Dorsolateral prefrontal cortex (tissue), 120 donors: ENCODE measurements at regions of chr15 and their contacts with region 1.

Region 1: DNA sequence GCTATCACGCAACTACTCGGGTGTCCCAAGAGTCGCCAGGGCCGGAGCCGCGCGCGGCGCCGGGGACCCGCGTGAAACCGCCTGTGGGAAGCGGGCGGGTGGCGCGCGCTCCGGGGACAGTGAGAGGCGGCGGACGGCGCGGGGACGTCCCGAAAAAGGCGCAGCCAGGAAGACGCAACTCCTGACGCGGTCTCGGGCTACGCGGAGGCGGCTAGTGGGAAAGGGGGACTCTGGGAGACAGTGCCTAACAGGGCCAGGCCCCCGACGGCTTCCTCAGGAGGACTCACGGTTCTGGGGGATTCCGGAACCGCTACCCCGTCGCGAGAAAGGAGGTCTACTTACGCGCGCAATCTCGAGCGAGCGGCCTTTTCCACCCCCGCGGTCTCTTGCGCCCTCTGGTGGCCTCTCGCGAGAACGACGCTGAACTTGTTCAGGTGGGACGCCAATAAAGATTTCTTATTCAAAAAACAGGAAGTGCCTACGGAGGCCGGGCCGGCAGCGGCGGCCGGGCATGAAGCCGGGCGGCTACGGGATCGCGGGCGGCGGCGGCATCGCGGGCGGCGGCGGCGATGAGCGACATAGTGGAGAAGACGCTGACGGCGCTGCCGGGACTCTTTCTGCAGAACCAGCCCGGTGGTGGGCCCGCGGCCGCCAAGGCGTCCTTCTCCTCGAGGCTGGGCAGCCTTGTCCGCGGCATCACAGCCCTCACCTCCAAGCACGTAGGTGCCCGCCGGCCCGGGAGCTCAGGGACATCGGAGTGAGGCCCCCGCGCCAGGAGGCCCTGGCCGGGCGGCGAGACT is at the start of gene AP4E1:
- DNase-seq: peak; percentile 80 to 92 (median 86)
- H3K4me3 ChIP-seq: peak within 1 kb of the TSS; percentile 52 to 100 (median 96)
- H3K27ac ChIP-seq: peak within 1 kb of the TSS; percentile 3 to 98 (median 93)
- H3K27me3 ChIP-seq: no peaks in the 10 kb centered on the region
- CTCF ChIP-seq: peak; percentile 85 to 100 (median 97)
- total RNA-seq, gene AP4E1: 7.4 to 15.4 (median 11.5) TPM

Region 2: GRCh38 chr15:50354838-50355618 is 553.4 kb before region 1 on chr15 and contains the start of gene GABPB1:
- intact Hi-C with region 1: loop called (anchors 2 to 10 kb)
- DNase-seq: peak; percentile 76 to 90 (median 84)
- H3K4me3 ChIP-seq: peak within 1 kb of the TSS; percentile 70 to 100 (median 93)
- H3K27ac ChIP-seq: peak within 1 kb of the TSS; percentile 87 to 100 (median 98)
- H3K27me3 ChIP-seq: no peaks in the 10 kb centered on the region
- CTCF ChIP-seq: peak in 14 of 56 donors; percentile 3 to 35 (median 10)
- total RNA-seq, gene GABPB1: 7.9 to 16.9 (median 11.0) TPM

Region 3: GRCh38 chr15:50424066-50424890 is 484.1 kb before region 1 on chr15 and contains the start of gene USP8:
- intact Hi-C with region 1: loop called in 1 of 2 experiments (anchors 5 kb)
- DNase-seq: peak; percentile 91 to 98 (median 94)
- H3K4me3 ChIP-seq: peak within 1 kb of the TSS; percentile 61 to 100 (median 91)
- H3K27ac ChIP-seq: peak within 1 kb of the TSS; percentile 42 to 97 (median 88)
- H3K27me3 ChIP-seq: no peaks in the 10 kb centered on the region
- CTCF ChIP-seq: peak in 22 of 56 donors; percentile 7 to 49 (median 20)
- total RNA-seq, gene USP8: 53.7 to 94.5 (median 72.2) TPM

Region 4: DNA sequence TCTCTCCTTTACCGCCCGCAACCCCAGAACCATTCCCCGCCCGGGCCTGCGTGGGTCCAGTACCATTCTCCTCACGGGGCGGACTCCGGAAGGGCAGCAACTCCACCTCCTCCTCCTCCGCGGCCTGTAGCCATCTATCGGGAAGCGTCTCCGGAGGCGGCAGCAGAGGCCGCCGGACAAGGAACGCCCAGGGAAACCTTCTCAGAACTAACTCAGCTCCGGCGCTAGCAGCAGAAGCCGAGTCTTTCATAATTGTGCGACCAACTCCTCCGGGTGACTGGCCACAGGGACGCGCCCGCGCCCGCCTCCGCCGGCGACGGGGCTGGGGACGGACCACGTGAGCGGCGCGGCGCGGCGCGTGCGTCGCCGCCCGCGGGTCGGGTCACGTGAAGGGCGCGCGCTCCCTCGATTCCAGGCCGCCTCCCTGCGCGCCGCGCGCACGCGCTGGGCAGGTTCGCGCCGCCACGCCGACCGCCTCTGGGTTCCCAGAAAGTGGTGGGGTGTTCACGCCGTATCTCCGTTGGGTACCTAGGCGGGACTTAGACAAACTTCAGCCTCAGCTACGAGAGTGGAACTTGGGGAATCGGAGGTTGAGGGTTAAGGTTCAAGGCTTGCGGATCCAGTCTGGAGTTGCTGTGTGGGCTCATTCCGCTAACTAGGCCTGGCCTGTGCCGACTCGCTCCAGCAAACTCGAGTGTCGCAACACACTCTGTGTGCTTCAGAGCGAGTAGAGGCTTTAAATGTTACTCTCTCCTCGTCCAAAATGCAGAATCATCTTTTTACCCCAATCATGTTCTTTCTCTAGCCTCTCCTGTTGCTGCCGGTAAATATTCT is 221.7 kb before region 1 on chr15 and contains the start of gene TRPM7:
- intact Hi-C with region 1: loop called (anchors 2 to 5 kb)
- DNase-seq: peak; percentile 67 to 91 (median 82)
- H3K4me3 ChIP-seq: peak within 1 kb of the TSS; percentile 58 to 99 (median 91)
- H3K27ac ChIP-seq: peak within 1 kb of the TSS; percentile 66 to 98 (median 94)
- H3K27me3 ChIP-seq: no peaks in the 10 kb centered on the region
- CTCF ChIP-seq: peak in 29 of 56 donors; percentile 1 to 63 (median 20)
- total RNA-seq, gene TRPM7: 25.9 to 59.0 (median 38.1) TPM

Region 5: GRCh38 chr15:50765195-50765973 is 143.0 kb before region 1 on chr15 and contains the start of gene SPPL2A:
- intact Hi-C with region 1: loop called in 1 of 2 experiments (anchors 10 kb)
- DNase-seq: peak; percentile 53 to 89 (median 74)
- H3K4me3 ChIP-seq: peak within 1 kb of the TSS; percentile 61 to 95 (median 88)
- H3K27ac ChIP-seq: peak within 1 kb of the TSS; percentile 57 to 96 (median 90)
- H3K27me3 ChIP-seq: no peaks in the 10 kb centered on the region
- CTCF ChIP-seq: peak in 11 of 56 donors; percentile 4 to 33 (median 15)
- total RNA-seq, gene SPPL2A: 29.9 to 66.0 (median 45.8) TPM

Region 6: DNA sequence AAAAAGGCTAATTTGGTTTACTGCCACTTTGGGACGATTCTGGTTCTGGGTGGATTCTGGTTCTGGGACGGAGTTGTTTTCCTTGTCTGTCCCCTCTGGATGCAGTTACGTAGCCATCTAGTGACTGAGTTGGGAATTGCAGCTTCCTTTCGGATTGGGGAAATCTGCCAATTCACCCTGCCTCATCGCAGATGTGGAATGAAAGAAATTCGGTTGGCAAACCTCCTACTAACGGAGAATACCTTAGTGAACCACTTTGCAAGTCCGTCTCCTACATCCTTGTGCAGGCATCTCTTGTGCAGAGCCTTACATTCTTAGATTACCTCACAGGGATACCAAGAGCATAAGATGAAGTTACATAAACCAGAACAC is 31.4 kb before region 1 on chr15:
- intact Hi-C with region 1: loop called in 1 of 2 experiments (anchors 1 kb)
- DNase-seq: peak in 8 of 10 donors; percentile 55 to 82 (median 60)
- H3K4me3 ChIP-seq: peak overlapping the region; percentile 8 to 68 (median 49)
- H3K27ac ChIP-seq: peak overlapping the region in 20 of 59 donors; percentile 4 to 72 (median 39)
- H3K27me3 ChIP-seq: no peaks in the 10 kb centered on the region
- CTCF ChIP-seq: peak; percentile 89 to 99 (median 95)

Region 7: GRCh38 chr15:51051776-51052175 is 143.4 kb after region 1 on chr15:
- intact Hi-C with region 1: no loop called
- DNase-seq: peak in 3 of 10 donors; percentile 12 to 48 (median 42)
- H3K4me3 ChIP-seq: no peak overlapping the region
- H3K27ac ChIP-seq: peak overlapping the region in 1 of 59 donors; percentile 47
- H3K27me3 ChIP-seq: no peaks in the 10 kb centered on the region
- CTCF ChIP-seq: no peak